Activated CD8-positive, alpha-beta T cell treated with anti-CD3 and anti-CD28 coated beads, Interleukin-2, amount 10 ng/mL, durations not matched to agents 7 days and 5 days (primary cell): ENCODE measurements at regions of chr13 and their contacts with region 1.

Region 1: GRCh38 chr13:26698392-26699196 is 62.0 kb downstream of the GPR12 start:
- DNase-seq: peak; percentile 86
- ATAC-seq: peak; percentile 86
- H3K4me3 Mint-ChIP-seq: no peak overlapping the region
- H3K27ac Mint-ChIP-seq: no peak overlapping the region
- H3K4me1 Mint-ChIP-seq: no peaks in the 10 kb centered on the region
- H3K27me3 Mint-ChIP-seq: peaks cover 2% of the 10 kb centered on the region

Region 2: GRCh38 chr13:26186118-26186870 is 512.3 kb before region 1 on chr13:
- CTCF ChIA-PET with region 1: interaction called, 131 read pairs
- POLR2A ChIA-PET with region 1: interaction called, 4 read pairs
- DNase-seq: peak; percentile 92
- ATAC-seq: peak; percentile 96
- H3K4me3 Mint-ChIP-seq: peak overlapping the region; percentile 84
- H3K27ac Mint-ChIP-seq: peak overlapping the region; percentile 91
- H3K4me1 Mint-ChIP-seq: peaks cover 30% of the 10 kb centered on the region
- H3K27me3 Mint-ChIP-seq: no peaks in the 10 kb centered on the region

Region 3: GRCh38 chr13:26494571-26495195 is 203.9 kb before region 1 on chr13:
- CTCF ChIA-PET with region 1: interaction called, 26 read pairs
- POLR2A ChIA-PET with region 1: no interaction called
- DNase-seq: no peak
- ATAC-seq: no peak
- H3K4me3 Mint-ChIP-seq: no peak overlapping the region
- H3K27ac Mint-ChIP-seq: no peak overlapping the region
- H3K4me1 Mint-ChIP-seq: no peaks in the 10 kb centered on the region
- H3K27me3 Mint-ChIP-seq: peaks cover 8% of the 10 kb centered on the region

Region 4: GRCh38 chr13:26682606-26683005 is 16.0 kb before region 1 on chr13:
- CTCF ChIA-PET with region 1: interaction called, 24 read pairs
- POLR2A ChIA-PET with region 1: no interaction called
- DNase-seq: no peak
- ATAC-seq: no peak
- H3K4me3 Mint-ChIP-seq: no peak overlapping the region
- H3K27ac Mint-ChIP-seq: no peak overlapping the region
- H3K4me1 Mint-ChIP-seq: no peaks in the 10 kb centered on the region
- H3K27me3 Mint-ChIP-seq: peaks cover 3% of the 10 kb centered on the region

Region 5: DNA sequence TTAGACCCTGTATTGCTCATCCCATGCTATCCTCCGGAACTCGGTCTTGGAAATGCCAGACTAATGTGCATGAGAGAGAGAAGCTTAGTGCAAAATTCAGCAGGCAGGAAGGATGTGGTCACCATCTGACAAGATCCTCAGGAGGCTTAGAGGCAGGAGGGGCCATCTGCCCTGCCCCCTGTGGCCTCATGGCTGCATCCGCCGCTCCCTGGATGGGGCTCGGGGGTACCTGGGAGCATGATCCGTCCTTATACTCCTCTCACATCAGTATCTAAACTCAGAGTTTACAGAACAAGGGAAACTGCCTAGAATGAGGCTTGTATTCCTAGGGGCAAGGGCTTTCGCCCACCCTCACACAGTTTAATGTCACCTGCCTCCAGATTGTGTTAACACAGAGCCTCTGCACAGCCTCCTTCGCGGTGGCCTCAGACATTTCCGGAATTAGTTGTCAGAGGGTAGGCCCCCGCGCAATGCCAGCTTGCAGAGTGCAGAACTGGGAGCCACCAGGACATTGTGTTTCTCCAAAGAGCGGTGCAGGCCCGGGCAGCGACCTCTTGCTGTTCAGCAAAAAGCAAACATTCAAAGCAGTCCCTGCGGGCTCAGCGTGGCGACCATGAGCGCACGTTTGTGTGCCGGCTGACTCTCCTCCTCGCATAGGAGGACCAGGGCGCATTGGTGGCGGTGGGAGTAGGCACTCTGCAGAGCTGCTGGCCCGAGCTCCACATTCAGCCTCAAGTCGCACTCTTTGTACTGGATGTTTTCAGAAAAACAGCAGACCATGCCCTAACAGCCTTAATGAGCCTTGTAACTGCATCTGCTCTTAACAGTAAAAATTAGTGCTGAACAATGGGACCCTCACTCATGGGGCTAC is 22.9 kb after region 1 on chr13:
- CTCF ChIA-PET with region 1: interaction called, 16 read pairs
- POLR2A ChIA-PET with region 1: no interaction called
- DNase-seq: peak; percentile 77
- ATAC-seq: peak; percentile 90
- H3K4me3 Mint-ChIP-seq: peak overlapping the region; percentile 70
- H3K27ac Mint-ChIP-seq: peak overlapping the region; percentile 93
- H3K4me1 Mint-ChIP-seq: peaks cover 30% of the 10 kb centered on the region
- H3K27me3 Mint-ChIP-seq: no peaks in the 10 kb centered on the region